Aorta (tissue), 5 donors: ENCODE measurements at regions of chr10 and their contacts with region 1.

Region 1: DNA sequence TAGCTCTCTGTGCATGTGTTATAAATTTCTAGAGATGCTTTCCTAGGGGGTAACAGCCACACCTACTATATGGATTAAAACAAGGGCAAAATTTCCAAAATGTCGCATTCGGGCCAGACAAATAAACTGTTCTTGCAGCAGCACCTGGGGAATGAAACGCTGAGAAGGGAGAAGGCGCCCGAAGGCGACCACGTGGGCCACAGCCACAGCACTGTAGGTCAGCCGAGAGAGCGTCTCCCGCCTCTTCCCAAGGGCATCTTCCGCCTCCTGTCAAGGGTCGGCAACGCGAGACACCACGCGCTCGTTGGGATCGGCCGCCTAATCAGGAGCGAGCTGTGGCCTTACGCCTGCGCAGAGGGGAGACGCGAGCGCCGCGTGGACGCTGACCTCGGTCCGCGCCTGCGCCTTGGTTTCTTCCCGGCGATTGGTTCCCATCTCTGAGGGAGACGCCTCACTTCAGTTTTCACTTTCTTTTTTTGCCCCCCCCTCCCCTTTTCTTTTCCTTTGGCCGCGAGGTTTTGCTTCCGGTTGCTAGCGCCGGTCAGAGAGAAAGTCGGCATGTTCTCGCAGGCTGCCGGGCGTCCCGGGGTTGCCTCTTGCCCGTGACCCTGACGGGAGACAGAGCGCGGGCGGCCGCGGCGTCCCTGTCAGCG is at the start of gene TASOR2:
- DNase-seq: peak; percentile 99
- ATAC-seq: peak; percentile 97
- H3K4me3 ChIP-seq: peak within 1 kb of the TSS; percentile 81 to 90
- H3K27ac ChIP-seq: peak within 1 kb of the TSS in 1 of 2 donors; percentile 73
- H3K4me1 ChIP-seq: no peaks in the 10 kb centered on the region
- H3K27me3 ChIP-seq: no peaks in the 10 kb centered on the region
- total RNA-seq, gene TASOR2: 68.2 to 72.6 TPM

Region 2: DNA sequence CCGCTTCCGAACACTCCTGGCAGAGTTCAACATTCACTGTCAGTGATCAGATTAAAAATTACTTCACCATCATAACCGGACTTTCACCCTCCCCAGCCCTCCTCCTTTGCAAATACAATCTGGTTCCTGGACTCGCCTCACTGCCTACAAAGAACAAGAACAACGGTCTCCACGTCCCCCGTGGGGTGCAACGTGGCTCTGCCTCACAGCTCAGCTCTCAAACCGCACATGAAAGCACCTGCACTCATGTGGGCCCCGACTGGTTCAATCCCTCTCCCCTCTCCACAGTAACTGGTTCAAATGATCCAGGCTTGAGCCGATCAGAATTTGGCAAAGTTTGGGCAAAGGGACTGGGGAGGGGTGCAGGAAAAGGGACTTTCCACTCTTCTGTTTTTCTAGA is 39.1 kb before region 1 on chr10:
- intact Hi-C with region 1: no loop called
- DNase-seq: no peak
- ATAC-seq: peak; percentile 55
- H3K4me3 ChIP-seq: no peak overlapping the region
- H3K27ac ChIP-seq: no peak overlapping the region
- H3K4me1 ChIP-seq: peaks cover 0 to 2% of the 10 kb centered on the region in 2 donors
- H3K27me3 ChIP-seq: no peaks in the 10 kb centered on the region

Region 3: DNA sequence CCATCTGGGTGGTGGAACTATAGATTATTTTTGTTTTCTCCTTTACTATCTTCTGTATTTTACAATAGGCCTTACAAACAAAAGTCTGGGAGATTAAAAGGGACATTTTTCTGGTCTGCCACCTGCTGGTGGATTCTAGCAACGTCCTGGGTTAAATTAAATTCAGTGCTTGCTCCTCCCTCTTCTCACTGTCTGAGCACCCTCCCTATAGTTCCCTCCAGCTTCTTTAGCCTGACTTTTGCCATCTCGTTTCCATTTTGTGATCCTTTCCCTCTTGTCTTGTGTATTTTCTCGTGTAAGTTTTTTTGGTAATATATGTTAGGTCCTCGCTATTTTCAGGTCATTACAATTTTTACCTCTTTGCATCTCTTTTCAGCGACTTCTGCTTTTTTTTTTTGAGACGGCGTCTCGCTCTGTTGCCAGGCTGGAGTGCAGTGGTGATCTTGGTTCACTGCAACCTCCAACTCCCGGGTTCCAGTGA is 189.1 kb after region 1 on chr10:
- intact Hi-C with region 1: loop called (anchors 10 kb)
- DNase-seq: peak in 1 of 2 donors; percentile 70
- ATAC-seq: peak; percentile 88
- H3K4me3 ChIP-seq: no peak overlapping the region
- H3K27ac ChIP-seq: no peak overlapping the region
- H3K4me1 ChIP-seq: no peaks in the 10 kb centered on the region
- H3K27me3 ChIP-seq: no peaks in the 10 kb centered on the region